Adrenal gland (tissue), 19 donors: ENCODE measurements at regions of chr15 and their contacts with region 1.

Region 1: DNA sequence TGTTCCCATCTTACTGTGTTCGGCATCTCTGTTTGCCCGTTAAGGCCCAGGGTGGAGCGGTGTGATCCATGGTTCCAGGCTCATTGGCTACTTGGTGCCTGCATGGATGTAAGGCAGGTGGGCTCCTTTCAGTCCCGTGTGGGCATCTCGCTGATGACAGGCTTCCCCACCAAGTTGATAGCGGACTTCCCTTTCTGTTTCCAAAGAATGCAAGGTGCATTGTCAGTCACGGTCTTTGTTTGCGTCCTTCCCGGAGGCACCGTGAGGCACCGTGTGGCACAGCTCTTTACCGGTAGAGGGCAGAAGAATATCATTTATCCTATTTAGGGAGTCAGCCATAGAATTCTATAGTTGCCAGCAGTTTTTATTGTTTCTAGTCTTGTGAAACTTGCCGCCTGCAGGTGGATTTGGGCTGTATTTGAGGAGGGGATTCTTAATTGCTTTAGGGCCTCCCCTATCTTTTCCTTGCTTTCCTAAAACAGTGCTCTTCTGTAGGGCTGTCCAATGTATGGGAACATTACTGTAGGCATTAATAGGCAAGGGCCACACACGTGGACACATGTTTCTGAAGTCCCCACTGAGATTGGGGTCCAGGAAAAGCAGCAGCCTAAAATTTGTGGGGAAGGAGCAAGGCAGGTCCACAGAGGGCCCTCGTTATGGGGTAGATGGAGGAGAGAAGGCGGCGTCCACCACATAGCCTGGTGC is 244.1 kb downstream of the SLCO3A1 start:
- DNase-seq: peak; percentile 31 to 68 (median 50)
- H3K4me3 ChIP-seq: no peak overlapping the region
- H3K27ac ChIP-seq: no peak overlapping the region
- H3K4me1 ChIP-seq: peaks cover 0 to 3% of the 10 kb centered on the region in 2 donors
- H3K27me3 ChIP-seq: no peaks in the 10 kb centered on the region
- CTCF ChIP-seq: peak; percentile 68 to 82 (median 80)
- POLR2A ChIP-seq: no peak

Region 2: GRCh38 chr15:92043263-92043662 is 54.4 kb before region 1 on chr15:
- intact Hi-C with region 1: no loop called
- DNase-seq: no peak
- H3K4me3 ChIP-seq: no peak overlapping the region
- H3K27ac ChIP-seq: no peak overlapping the region
- H3K4me1 ChIP-seq: no peaks in the 10 kb centered on the region
- H3K27me3 ChIP-seq: no peaks in the 10 kb centered on the region
- CTCF ChIP-seq: no peak
- POLR2A ChIP-seq: no peak

Region 3: DNA sequence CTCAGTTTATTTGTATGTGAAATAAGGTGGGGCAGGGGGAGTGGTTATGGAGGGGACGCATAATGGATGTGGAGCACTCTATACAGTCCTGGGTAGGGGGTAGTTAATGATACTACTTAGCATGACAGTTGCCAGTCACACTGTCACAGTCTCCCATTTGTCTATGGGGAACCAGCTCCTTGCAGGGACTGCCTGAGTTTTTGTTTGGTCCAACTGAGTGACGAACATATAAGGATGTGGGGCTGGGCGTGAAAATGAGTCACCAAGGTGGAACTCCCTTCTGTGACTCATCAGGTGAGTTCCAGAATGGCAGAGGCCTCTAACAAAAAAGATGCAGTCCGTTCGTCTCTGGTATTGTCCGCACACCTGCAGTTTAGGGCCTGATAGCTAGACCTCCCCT is 60.8 kb after region 1 on chr15:
- intact Hi-C with region 1: loop called in 1 of 2 experiments (anchors 10 kb)
- DNase-seq: peak in 1 of 7 donors; percentile 3
- H3K4me3 ChIP-seq: no peak overlapping the region
- H3K27ac ChIP-seq: no peak overlapping the region
- H3K4me1 ChIP-seq: no peaks in the 10 kb centered on the region
- H3K27me3 ChIP-seq: no peaks in the 10 kb centered on the region
- CTCF ChIP-seq: no peak
- POLR2A ChIP-seq: no peak

Region 4: GRCh38 chr15:92205255-92205739 is 107.7 kb after region 1 on chr15:
- intact Hi-C with region 1: loop called in 1 of 2 experiments (anchors 5 kb)
- DNase-seq: peak; percentile 20 to 57 (median 25)
- H3K4me3 ChIP-seq: no peak overlapping the region
- H3K27ac ChIP-seq: no peak overlapping the region
- H3K4me1 ChIP-seq: no peaks in the 10 kb centered on the region
- H3K27me3 ChIP-seq: no peaks in the 10 kb centered on the region
- CTCF ChIP-seq: peak; percentile 6 to 43 (median 30)
- POLR2A ChIP-seq: no peak

Region 5: GRCh38 chr15:92226014-92226612 is 128.5 kb after region 1 on chr15:
- intact Hi-C with region 1: loop called in 1 of 2 experiments (anchors 5 kb)
- DNase-seq: peak in 6 of 7 donors; percentile 22 to 53 (median 26)
- H3K4me3 ChIP-seq: no peak overlapping the region
- H3K27ac ChIP-seq: no peak overlapping the region
- H3K4me1 ChIP-seq: no peaks in the 10 kb centered on the region
- H3K27me3 ChIP-seq: no peaks in the 10 kb centered on the region
- CTCF ChIP-seq: peak; percentile 22 to 57 (median 54)
- POLR2A ChIP-seq: no peak

Region 6: DNA sequence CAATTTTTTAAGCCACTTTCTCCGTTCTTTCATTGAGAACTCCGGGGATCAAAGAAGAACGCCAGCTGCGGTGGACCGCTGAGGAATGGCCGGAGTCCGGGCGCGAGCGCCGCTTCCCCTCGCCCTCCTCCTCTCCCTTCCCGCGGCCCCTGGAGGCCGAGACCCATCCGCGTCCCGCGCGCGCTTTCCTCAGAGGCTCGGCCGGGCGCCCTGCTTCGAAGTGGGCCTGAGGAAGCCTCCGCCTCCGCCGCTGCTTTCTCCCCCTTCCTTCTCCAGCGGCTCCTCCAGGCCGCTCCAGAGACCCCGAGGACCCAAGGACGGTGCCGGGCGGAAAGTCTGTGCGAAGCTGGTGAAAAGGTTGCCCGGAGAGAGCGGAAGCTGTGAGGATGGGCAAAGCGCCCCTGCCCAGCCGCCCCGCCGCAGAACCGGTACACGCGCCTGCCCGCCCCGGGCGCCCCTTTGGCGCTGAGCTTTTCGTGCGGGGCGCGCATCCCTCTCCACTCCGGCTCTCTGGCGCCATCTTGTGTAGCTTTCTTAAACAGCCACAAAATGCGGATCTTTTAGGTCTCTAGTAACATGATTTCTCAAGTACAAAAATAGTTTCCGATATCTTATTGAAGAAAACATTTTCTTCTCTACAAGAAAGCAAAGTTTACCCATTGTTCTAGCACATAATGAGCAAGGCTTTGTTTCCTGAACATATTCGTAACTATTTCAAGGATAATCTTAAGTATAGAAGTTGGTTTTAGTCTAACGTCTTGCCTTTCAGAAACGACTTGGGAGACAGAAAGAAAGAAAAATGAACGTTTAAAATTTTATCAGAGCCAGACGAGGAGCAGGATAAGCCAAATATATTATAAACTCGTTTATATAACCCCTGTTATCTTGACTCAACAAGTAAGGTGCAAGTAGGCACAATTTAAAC is 617.1 kb after region 1 on chr15:
- intact Hi-C with region 1: loop called in 1 of 2 experiments (anchors 10 kb)
- DNase-seq: peak; percentile 63 to 88 (median 76)
- H3K4me3 ChIP-seq: peak overlapping the region in 2 of 4 donors; percentile 46 to 70
- H3K27ac ChIP-seq: peak overlapping the region in 4 of 5 donors; percentile 25 to 83 (median 52)
- H3K4me1 ChIP-seq: no peaks in the 10 kb centered on the region
- H3K27me3 ChIP-seq: no peaks in the 10 kb centered on the region
- CTCF ChIP-seq: peak; percentile 74 to 94 (median 80)
- POLR2A ChIP-seq: no peak